GM12878 (cell line): ENCODE measurements at regions of chr1 and their contacts with region 1.

Region 1: DNA sequence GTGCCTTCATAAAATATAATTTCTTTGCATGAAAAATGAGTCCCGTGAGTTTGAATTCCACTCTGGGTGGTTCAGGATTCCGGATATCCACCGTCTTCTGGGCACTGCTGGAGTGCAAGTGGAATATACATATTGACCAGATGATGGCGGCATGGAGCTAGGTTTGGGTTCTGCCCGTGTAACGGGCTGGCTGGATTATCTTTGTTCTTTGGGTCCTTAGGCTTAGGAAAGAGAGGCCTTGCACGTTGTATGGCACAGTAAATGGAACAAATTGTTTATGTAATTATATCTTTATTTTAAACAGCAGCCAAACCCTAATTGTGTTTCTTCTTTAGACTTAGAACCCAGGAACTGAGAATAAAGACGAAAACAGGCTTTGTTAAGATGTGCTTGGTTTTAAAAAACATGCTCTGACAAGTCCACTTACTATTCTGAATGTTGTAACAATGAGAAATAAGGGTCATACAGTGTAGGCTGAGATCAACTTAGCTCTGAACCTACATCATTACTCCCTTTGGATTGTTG is 13.5 kb upstream of the ACBD6 start:
- DNase-seq: peak; percentile 49
- ATAC-seq: peak; percentile 99
- H3K4me3 ChIP-seq: no peak overlapping the region
- H3K27ac ChIP-seq: peak overlapping the region; percentile 40; the same call in 1 of the 2 replicates
- H3K4me1 ChIP-seq: peaks cover 3% of the 10 kb centered on the region; the same call in 1 of the 2 replicates
- H3K27me3 ChIP-seq: no peaks in the 10 kb centered on the region
- CTCF ChIP-seq: peak; percentile 72 to 88 (median 76)
- EP300 ChIP-seq: no peak
- POLR2A ChIP-seq: no peak
- RAD21 ChIP-seq: peak; percentile 92

Region 2: GRCh38 chr1:180239145-180240096 is 276.5 kb before region 1 on chr1:
- CTCF ChIA-PET with region 1: no interaction called
- POLR2A ChIA-PET with region 1: no interaction called
- RAD21 ChIA-PET with region 1: no interaction called
- SMC1A ChIA-PET with region 1: no interaction called
- in situ Hi-C with region 1: no loop called
- intact Hi-C with region 1: no loop called
- DNase-seq: no peak
- ATAC-seq: no peak
- H3K4me3 ChIP-seq: no peak overlapping the region
- H3K27ac ChIP-seq: no peak overlapping the region
- H3K4me1 ChIP-seq: no peaks in the 10 kb centered on the region
- H3K27me3 ChIP-seq: peaks cover 8 to 37% of the 10 kb centered on the region in 2 experiments
- CTCF ChIP-seq: no peak
- EP300 ChIP-seq: no peak
- POLR2A ChIP-seq: no peak
- RAD21 ChIP-seq: no peak

Region 3: GRCh38 chr1:180502360-180503273 is 13.3 kb before region 1 on chr1 and contains the start of gene ACBD6:
- CTCF ChIA-PET with region 1: interaction called, 56 read pairs
- POLR2A ChIA-PET with region 1: interaction called, 4 read pairs
- RAD21 ChIA-PET with region 1: interaction called, 6 read pairs
- SMC1A ChIA-PET with region 1: interaction called, 9 read pairs
- in situ Hi-C with region 1: no loop called
- intact Hi-C with region 1: no loop called
- DNase-seq: peak; percentile 51
- ATAC-seq: peak; percentile 91
- H3K4me3 ChIP-seq: peak within 1 kb of the TSS; percentile 82
- H3K27ac ChIP-seq: peak within 1 kb of the TSS; percentile 94
- H3K4me1 ChIP-seq: no peaks in the 10 kb centered on the region
- H3K27me3 ChIP-seq: no peaks in the 10 kb centered on the region
- CTCF ChIP-seq: peak; percentile 5 to 33 (median 14); a peak in 3 of 6 replicates
- EP300 ChIP-seq: peak in 1 of 2 experiments; percentile 54; a peak in 3 of 4 replicates
- POLR2A ChIP-seq: peak; percentile 92; the same call in 1 of the 2 replicates
- RAD21 ChIP-seq: no peak
- polyA plus RNA-seq, gene ACBD6: 15.0 to 38.7 TPM

Region 4: DNA sequence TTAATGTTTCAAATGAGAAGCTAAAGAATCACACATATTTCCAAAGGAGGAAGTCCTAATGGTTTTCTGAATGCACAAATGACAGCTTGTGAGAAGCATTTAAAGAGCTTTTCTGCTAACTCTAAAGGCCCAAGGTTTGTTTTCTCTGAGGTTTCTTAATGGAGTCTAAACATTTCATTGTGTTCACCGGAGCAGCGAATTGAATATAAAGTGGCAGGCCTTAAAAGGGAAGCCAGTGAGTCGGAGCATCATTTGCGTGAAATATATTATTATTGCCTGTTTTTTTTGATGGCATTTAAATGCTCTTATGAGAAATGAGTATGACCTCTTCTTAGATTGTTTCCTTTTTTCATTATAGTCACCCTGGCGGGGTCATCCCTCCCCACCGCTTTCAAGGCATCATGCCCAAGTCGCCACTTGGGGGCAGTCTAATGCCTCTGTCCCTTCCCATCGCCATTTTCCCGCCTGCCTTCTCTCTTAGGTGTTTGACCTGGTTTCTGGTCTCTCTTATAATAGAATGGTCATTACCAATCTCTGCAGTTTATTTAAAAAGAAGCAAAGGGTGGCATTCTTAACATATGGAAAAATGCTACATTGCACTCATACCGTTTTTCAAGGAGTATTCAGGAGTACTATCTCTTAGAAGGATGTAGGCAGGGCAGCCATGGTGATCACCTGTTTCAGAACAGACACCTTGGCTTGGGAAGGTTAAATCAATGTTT is 17.5 kb after region 1 on chr1:
- CTCF ChIA-PET with region 1: interaction called, 26 read pairs
- POLR2A ChIA-PET with region 1: no interaction called
- RAD21 ChIA-PET with region 1: interaction called, 12 read pairs
- SMC1A ChIA-PET with region 1: interaction called, 8 read pairs
- in situ Hi-C with region 1: no loop called
- intact Hi-C with region 1: no loop called
- DNase-seq: no peak
- ATAC-seq: peak; percentile 97
- H3K4me3 ChIP-seq: no peak overlapping the region
- H3K27ac ChIP-seq: no peak overlapping the region
- H3K4me1 ChIP-seq: no peaks in the 10 kb centered on the region
- H3K27me3 ChIP-seq: peaks cover 0 to 2% of the 10 kb centered on the region in 2 experiments; a peak in 2 of 4 replicates
- CTCF ChIP-seq: peak; percentile 82 to 95 (median 88)
- EP300 ChIP-seq: no peak
- POLR2A ChIP-seq: no peak
- RAD21 ChIP-seq: peak; percentile 91

Region 5: DNA sequence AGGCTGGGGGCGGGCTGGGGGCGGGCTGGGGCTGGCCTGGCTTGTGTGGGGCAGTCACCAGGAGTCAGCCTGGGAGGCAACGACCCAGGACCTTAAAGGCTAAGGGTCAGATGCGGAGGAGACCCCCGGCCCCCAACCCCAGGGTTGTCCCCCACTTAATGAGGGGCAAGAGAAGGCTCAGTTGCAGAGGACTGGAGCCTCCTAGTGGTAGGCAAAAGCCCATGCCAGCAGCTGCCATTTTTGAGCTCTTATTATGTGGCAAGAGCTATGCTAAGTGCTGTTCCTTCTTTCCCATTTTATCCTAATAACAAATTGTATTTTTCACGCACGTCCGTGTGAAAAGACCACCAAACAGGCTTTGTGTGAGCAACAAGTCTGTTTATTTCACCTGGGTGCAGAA is 404.8 kb after region 1 on chr1:
- CTCF ChIA-PET with region 1: interaction called, 7 read pairs
- POLR2A ChIA-PET with region 1: interaction called, 3 read pairs
- RAD21 ChIA-PET with region 1: interaction called, 10 read pairs
- SMC1A ChIA-PET with region 1: interaction called, 3 read pairs
- in situ Hi-C with region 1: no loop called
- intact Hi-C with region 1: no loop called
- DNase-seq: no peak
- ATAC-seq: peak; percentile 38; the same call in 1 of the 3 replicates
- H3K4me3 ChIP-seq: no peak overlapping the region
- H3K27ac ChIP-seq: no peak overlapping the region
- H3K4me1 ChIP-seq: peaks cover 9% of the 10 kb centered on the region
- H3K27me3 ChIP-seq: peaks cover 0 to 3% of the 10 kb centered on the region in 2 experiments; a peak in 1 of 4 replicates
- CTCF ChIP-seq: peak; percentile 41 to 57 (median 48)
- EP300 ChIP-seq: no peak
- POLR2A ChIP-seq: no peak
- RAD21 ChIP-seq: peak; percentile 33; the same call in 1 of the 2 replicates

Region 6: GRCh38 chr1:181166377-181167196 is 650.7 kb after region 1 on chr1:
- CTCF ChIA-PET with region 1: interaction called, 12 read pairs
- POLR2A ChIA-PET with region 1: no interaction called
- RAD21 ChIA-PET with region 1: interaction called, 3 read pairs
- SMC1A ChIA-PET with region 1: interaction called, 11 read pairs
- in situ Hi-C with region 1: no loop called
- intact Hi-C with region 1: loop called (anchors 1 kb)
- DNase-seq: no peak
- ATAC-seq: peak; percentile 100
- H3K4me3 ChIP-seq: no peak overlapping the region
- H3K27ac ChIP-seq: no peak overlapping the region
- H3K4me1 ChIP-seq: no peaks in the 10 kb centered on the region
- H3K27me3 ChIP-seq: no peaks in the 10 kb centered on the region
- CTCF ChIP-seq: peak; percentile 83 to 88 (median 84)
- EP300 ChIP-seq: no peak
- POLR2A ChIP-seq: no peak
- RAD21 ChIP-seq: peak; percentile 94